ENCODE measurements at regions of chr7 and their contacts with region 1.

Region 1: GRCh38 chr7:129975309-129975708 is 22.5 kb upstream of the UBE2H start:
- DNase-seq: no peak
- ATAC-seq: no peak
- H3K4me3 ChIP-seq: no peak overlapping the region
- H3K4me3 Mint-ChIP-seq: no peak overlapping the region
- H3K27ac ChIP-seq: no peak overlapping the region
- H3K27ac Mint-ChIP-seq: no peak overlapping the region
- H3K4me1 ChIP-seq: no peaks in the 10 kb centered on the region
- H3K4me1 Mint-ChIP-seq: peaks cover 0 to 3% (median 0%) of the 10 kb centered on the region in 3 donors
- H3K27me3 ChIP-seq: peaks cover 0 to 4% of the 10 kb centered on the region in 2 experiments
- H3K27me3 Mint-ChIP-seq: no peaks in the 10 kb centered on the region

Region 2: DNA sequence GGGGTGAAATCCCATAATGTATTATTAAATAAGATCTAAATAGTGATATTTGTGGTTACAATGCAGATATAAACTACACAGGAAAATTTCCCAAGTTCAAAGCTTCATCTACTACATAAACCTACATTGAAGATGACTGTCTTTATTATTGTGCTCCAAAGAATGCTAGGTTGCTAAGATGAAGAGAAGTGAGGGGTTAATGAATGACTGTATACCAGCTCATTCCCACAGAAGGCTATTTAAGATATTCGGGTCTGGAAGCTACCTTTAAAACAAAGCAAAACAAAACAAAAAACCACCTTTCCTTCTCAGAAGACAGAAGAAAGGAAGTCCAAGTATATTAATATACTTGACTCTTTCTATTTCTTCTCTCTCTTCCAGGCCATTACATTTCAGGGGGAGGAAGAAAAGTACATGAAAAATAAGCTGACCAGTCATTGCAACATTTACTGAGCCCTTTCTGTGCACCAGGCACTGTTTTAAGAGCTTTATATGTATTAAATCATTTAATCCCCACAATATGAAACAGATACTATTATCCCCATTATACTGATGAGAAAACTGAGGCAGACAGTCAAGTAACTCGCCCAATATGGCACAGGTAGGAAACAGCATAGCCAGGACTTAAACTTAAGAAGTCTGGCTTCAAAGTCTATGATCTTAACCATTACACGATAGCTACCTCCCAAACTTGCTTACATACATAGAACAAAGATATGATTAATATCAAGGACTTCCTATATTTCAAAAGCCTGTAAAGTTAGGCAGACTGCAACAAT is 968.5 kb before region 1 on chr7:
- CTCF ChIA-PET with region 1: interaction called in 1 of 2 experiments, 12 read pairs
- POLR2A ChIA-PET with region 1: no interaction called
- DNase-seq: no peak
- ATAC-seq: no peak
- H3K4me3 ChIP-seq: no peak overlapping the region
- H3K4me3 Mint-ChIP-seq: no peak overlapping the region
- H3K27ac ChIP-seq: no peak overlapping the region
- H3K27ac Mint-ChIP-seq: no peak overlapping the region
- H3K4me1 ChIP-seq: no peaks in the 10 kb centered on the region
- H3K4me1 Mint-ChIP-seq: peaks cover 11 to 33% (median 25%) of the 10 kb centered on the region in 3 donors
- H3K27me3 ChIP-seq: no peaks in the 10 kb centered on the region
- H3K27me3 Mint-ChIP-seq: no peaks in the 10 kb centered on the region

Measured in T-cell (primary cell).